Colonic mucosa (tissue), 4 donors: ENCODE measurements at regions of chr4 and their contacts with region 1.

Region 1: DNA sequence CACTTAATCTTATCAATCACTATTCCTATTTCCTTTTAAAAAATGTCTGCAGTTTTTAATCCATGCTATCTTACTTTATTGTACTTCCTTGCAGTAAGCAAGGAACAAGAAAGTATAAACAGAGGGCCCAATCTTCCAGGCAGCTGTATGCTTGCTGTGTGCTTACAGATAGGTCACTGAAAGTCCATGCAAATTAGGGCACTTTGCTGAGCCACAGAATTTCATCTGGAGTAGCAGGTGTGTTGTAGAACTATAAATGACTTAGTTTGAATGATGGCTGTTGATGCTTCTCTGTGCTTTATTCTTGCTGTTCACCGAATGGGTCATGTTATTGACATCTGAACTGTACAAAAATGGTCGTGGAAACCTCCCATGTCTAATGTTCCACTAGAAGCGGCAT is 154.6 kb downstream of the ATOH1 start:
- DNase-seq: no peak
- H3K4me3 ChIP-seq: no peak overlapping the region
- H3K27ac ChIP-seq: no peak overlapping the region
- H3K4me1 ChIP-seq: no peaks in the 10 kb centered on the region
- H3K27me3 ChIP-seq: no peaks in the 10 kb centered on the region
- CTCF ChIP-seq: no peak

Region 2: DNA sequence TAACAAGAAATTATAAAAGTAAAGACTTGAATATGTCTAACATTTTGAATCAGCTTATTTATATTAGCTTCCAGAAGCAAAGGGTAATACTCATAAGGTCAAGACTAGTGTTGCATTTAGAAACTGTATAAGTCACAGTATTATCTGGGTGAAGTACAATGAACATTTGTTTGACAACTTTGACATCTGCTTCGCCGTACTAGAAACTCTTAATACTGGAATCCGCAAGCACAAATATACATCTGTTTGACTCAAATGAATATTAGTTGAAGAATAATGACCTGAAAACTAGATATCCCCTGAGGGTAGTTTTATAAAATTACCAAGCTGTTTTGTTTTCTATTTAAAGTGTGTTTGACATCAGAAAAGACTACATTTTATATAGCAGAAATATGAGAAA is 290.0 kb before region 1 on chr4:
- intact Hi-C with region 1: no loop called
- DNase-seq: no peak
- H3K4me3 ChIP-seq: no peak overlapping the region
- H3K27ac ChIP-seq: no peak overlapping the region
- H3K4me1 ChIP-seq: no peaks in the 10 kb centered on the region
- H3K27me3 ChIP-seq: no peaks in the 10 kb centered on the region
- CTCF ChIP-seq: no peak

Region 3: DNA sequence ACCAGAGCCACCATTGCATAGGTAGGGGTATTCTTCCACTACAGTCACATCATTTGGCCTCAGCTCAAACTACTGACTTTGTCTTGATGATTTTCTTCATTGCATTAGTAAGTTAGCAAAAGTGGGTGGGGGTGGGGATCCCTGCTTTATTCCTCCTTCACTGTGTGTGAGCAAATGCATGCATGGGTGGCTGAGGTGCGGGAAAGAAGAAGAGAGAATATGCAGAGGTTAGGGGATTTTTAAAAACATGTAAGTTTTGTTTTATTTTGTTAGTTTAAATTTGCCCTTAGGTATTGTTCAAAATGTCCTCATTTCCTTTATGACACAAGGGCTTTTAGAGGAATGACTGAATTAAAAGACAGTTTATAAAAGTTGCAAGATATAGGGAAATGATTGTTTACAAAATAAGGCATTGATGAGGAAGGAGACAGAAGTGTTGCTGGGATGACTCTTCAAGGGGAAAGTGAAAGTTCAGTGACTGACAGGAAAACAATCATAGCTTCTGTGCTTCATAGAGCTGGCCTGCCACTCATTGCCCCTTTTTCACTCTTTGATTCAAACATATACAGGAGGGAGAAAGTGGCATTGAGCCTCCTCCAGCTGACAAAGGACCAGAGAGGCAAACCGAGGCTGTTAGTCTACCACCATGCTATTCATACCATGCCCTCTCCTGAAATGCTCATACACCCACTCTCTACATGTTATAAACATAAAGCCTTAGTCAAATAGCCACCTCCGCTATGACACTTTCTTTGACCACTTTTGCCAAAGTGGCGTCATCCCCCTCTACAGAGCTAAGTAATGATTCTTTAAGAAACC is 234.0 kb before region 1 on chr4:
- intact Hi-C with region 1: no loop called
- DNase-seq: no peak
- H3K4me3 ChIP-seq: no peak overlapping the region
- H3K27ac ChIP-seq: no peak overlapping the region
- H3K4me1 ChIP-seq: no peaks in the 10 kb centered on the region
- H3K27me3 ChIP-seq: no peaks in the 10 kb centered on the region
- CTCF ChIP-seq: no peak

Region 4: GRCh38 chr4:93771640-93772411 is 211.3 kb before region 1 on chr4:
- intact Hi-C with region 1: no loop called
- DNase-seq: peak; percentile 19
- H3K4me3 ChIP-seq: no peak overlapping the region
- H3K27ac ChIP-seq: no peak overlapping the region
- H3K4me1 ChIP-seq: no peaks in the 10 kb centered on the region
- H3K27me3 ChIP-seq: no peaks in the 10 kb centered on the region
- CTCF ChIP-seq: no peak

Region 5: GRCh38 chr4:94115687-94116086 is 132.5 kb after region 1 on chr4:
- intact Hi-C with region 1: loop called (anchors 10 kb)
- DNase-seq: no peak
- H3K4me3 ChIP-seq: no peak overlapping the region
- H3K27ac ChIP-seq: no peak overlapping the region
- H3K4me1 ChIP-seq: no peaks in the 10 kb centered on the region
- H3K27me3 ChIP-seq: no peaks in the 10 kb centered on the region
- CTCF ChIP-seq: no peak

Region 6: GRCh38 chr4:94390804-94391410 is 407.8 kb after region 1 on chr4:
- intact Hi-C with region 1: no loop called
- DNase-seq: peak; percentile 27
- H3K4me3 ChIP-seq: no peak overlapping the region
- H3K27ac ChIP-seq: no peak overlapping the region
- H3K4me1 ChIP-seq: no peaks in the 10 kb centered on the region
- H3K27me3 ChIP-seq: no peaks in the 10 kb centered on the region
- CTCF ChIP-seq: peak; percentile 33